H1 (cell line): ENCODE measurements at regions of chr16 and their contacts with region 1.

Region 1: DNA sequence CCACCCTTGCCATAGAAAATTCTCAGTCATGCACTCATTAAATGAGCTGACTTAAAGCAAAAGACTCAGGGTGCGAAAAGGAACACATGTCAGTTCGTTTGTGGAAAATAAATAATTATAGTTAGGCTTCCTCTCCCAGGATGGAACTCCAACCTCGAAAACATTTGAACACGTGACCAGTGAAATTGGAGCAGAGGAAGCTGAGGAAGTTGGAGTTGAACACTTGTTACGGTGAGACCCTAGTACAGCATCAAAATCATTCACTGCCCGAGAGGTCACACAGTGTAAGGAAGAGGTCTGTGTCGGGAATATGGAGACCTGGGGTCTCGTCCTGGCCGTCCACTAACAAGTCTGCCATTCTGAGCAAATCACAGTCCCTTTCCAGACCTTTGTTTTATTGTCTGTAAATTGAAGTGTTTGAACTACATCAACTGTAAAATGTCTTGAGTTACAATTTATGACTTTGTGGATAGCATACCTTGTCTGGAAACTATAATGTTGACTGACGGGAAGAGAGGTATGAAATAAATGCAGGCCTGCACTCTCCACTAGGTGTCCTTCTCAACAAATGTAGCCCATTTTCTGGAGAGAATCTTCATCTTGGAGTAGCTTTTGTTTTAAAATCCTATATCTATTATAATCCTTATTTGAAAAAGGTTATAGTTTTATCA is 7.7 kb downstream of the PSMD7 start:
- DNase-seq: no peak
- H3K4me3 ChIP-seq: no peak overlapping the region
- H3K27ac ChIP-seq: no peak overlapping the region
- H3K4me1 ChIP-seq: no peaks in the 10 kb centered on the region
- H3K27me3 ChIP-seq: no peaks in the 10 kb centered on the region
- CTCF ChIP-seq: peak in 1 of 3 experiments; percentile 33; a peak in 1 of 4 replicates
- EP300 ChIP-seq: no peak
- POLR2A ChIP-seq: no peak
- RAD21 ChIP-seq: no peak

Region 2: DNA sequence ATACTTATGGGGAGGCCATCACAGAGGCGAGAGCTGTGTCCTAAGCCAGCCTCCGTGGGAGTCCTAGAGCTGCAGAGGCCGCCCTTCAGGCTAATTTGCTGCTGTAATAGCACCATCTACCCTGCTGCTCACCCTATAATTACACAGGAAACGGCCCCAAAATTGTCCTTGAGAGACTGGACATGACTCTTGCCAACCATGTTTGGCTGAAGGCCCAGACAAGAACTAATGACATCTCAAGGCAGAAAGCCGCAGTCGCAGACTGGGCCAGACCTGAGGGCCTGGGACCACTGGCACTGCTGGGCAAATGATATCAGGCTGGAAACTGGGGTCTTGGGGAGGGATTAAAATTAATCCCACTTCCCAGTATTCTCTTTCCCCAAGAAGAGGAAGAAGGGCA is 16.4 kb after region 1 on chr16:
- CTCF ChIA-PET with region 1: interaction called, 28 read pairs
- POLR2A ChIA-PET with region 1: interaction called, 63 read pairs
- DNase-seq: no peak
- H3K4me3 ChIP-seq: no peak overlapping the region
- H3K27ac ChIP-seq: no peak overlapping the region
- H3K4me1 ChIP-seq: no peaks in the 10 kb centered on the region; a peak in 1 of 7 replicates
- H3K27me3 ChIP-seq: no peaks in the 10 kb centered on the region
- CTCF ChIP-seq: no peak
- EP300 ChIP-seq: no peak
- POLR2A ChIP-seq: no peak
- RAD21 ChIP-seq: no peak